BJ (cell line): ENCODE measurements at regions of chr3 and their contacts with region 1.

Region 1: DNA sequence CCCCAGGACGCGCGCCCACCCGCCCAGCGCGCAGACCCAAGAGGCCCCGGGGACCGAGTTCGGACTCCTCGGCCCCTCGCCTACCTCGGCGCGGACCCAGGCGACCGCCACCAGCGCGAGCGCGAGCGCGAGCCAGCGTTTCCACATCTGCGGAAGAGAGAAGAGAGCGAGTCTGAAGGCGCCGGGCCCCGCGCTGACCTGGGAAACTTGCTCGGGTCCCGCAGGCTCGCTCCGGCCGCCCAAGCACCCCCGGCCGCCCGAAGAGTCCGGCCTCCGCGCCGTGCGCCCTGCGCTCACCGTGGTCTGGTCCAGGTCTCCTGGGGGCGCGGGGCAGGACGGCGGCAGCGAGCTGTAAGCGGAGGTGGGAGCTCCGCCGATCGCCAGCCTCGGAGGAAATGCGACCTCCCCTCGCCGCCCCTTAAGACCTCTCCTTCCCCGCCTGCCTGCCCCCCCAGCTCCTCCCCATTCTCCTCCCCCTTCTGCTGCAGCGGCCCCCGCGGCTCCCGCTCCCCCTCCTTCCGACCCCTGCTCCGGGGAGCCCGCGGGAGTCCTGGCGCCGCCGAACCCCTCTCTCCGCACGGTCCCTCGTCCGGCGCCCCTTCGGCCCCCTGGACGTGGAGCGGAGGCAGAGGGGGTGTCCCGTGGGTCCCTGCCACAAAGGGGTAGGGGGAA is at the start of gene FSTL1:
- DNase-seq: no peak
- H3K4me3 ChIP-seq: peak within 1 kb of the TSS; percentile 94
- H3K27me3 ChIP-seq: no peaks in the 10 kb centered on the region
- CTCF ChIP-seq: no peak
- polyA plus RNA-seq, gene FSTL1: 3,514 and 4,020 TPM in 2 replicates

Region 2: GRCh38 chr3:120218981-120219380 is 231.8 kb before region 1 on chr3:
- CTCF ChIA-PET with region 1: no interaction called
- POLR2A ChIA-PET with region 1: no interaction called
- DNase-seq: no peak
- H3K4me3 ChIP-seq: no peak overlapping the region
- H3K27me3 ChIP-seq: no peaks in the 10 kb centered on the region
- CTCF ChIP-seq: no peak

Region 3: DNA sequence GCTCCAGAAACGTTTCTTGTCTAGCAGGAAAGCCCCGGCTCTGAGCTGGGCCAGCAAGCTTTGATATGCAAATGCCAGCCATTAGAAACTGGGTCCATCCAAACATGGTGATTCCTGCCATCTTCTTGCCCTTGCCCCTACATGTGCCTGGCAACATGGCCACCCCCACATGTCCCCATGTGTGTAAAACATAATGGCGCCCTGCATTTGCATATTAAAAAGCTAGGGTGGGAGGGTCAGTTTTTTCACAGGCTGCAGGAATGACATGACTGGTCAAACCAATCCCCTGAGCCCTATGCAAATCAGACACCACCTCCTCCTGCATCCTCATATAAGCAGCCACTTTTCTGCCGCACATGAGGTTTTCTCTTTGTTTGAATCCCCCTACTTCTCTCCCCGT is 186.9 kb before region 1 on chr3:
- CTCF ChIA-PET with region 1: no interaction called
- POLR2A ChIA-PET with region 1: no interaction called
- DNase-seq: no peak
- H3K4me3 ChIP-seq: no peak overlapping the region
- H3K27me3 ChIP-seq: peaks cover 2% of the 10 kb centered on the region
- CTCF ChIP-seq: no peak

Region 4: GRCh38 chr3:120460862-120461261 is 10.1 kb after region 1 on chr3:
- CTCF ChIA-PET with region 1: interaction called, 10 read pairs
- POLR2A ChIA-PET with region 1: interaction called, 4 read pairs
- DNase-seq: no peak
- H3K4me3 ChIP-seq: no peak overlapping the region
- H3K27me3 ChIP-seq: no peaks in the 10 kb centered on the region
- CTCF ChIP-seq: no peak

Region 5: DNA sequence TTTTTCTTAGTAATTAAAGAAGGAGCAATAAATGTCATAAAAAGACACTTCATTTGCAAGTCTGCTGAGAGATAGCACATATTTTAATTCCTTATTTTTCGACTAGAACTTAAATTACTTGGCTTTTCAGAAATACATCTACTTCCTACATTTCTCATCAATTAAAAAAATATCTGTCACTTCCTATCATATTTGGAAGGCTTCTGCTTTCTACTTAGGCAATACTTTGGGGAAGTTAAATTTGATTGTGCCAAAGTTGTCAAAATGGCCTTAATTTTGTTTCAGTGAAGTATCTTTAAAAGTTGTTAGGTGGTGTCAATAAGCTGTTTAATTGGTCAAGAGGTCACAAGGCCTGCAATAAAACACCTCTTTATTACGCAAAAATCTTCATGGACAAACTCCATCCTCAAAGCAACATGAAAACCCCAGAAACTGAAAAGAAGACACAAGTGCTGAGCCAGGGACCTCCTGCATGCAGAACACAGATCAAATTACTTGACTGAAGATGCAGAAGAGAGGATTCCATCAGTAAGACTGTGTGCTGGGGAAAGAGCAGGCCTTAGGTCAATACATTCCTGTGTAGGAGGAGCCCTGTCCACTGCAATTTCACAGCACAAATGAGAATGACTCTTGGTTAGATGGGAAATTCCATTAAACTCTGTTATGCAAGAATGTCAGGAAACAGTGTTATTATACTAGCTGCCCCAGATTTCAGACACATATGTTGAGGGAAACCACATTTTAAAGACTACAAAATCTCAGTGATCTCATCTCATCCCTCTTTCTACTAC is 48.0 kb after region 1 on chr3:
- CTCF ChIA-PET with region 1: interaction called, 4 read pairs
- POLR2A ChIA-PET with region 1: interaction called, 14 read pairs
- DNase-seq: peak; percentile 99
- H3K4me3 ChIP-seq: no peak overlapping the region
- H3K27me3 ChIP-seq: no peaks in the 10 kb centered on the region
- CTCF ChIP-seq: no peak